Left ventricle myocardium inferior (tissue), 1 donor: ENCODE measurements at regions of chr2 and their contacts with region 1.

Region 1: GRCh38 chr2:187453078-187453641 is 5.1 kb upstream of the CALCRL start:
- DNase-seq: no peak
- H3K4me3 ChIP-seq: no peak overlapping the region
- H3K27ac ChIP-seq: no peak overlapping the region
- H3K4me1 ChIP-seq: no peaks in the 10 kb centered on the region
- H3K27me3 ChIP-seq: no peaks in the 10 kb centered on the region
- CTCF ChIP-seq: peak; percentile 62

Region 2: GRCh38 chr2:186862869-186863709 is 590.1 kb before region 1 on chr2:
- intact Hi-C with region 1: loop called (anchors 5 kb)
- DNase-seq: no peak
- H3K4me3 ChIP-seq: no peak overlapping the region
- H3K27ac ChIP-seq: no peak overlapping the region
- H3K4me1 ChIP-seq: peaks cover 4% of the 10 kb centered on the region
- H3K27me3 ChIP-seq: no peaks in the 10 kb centered on the region
- CTCF ChIP-seq: peak; percentile 84

Region 3: DNA sequence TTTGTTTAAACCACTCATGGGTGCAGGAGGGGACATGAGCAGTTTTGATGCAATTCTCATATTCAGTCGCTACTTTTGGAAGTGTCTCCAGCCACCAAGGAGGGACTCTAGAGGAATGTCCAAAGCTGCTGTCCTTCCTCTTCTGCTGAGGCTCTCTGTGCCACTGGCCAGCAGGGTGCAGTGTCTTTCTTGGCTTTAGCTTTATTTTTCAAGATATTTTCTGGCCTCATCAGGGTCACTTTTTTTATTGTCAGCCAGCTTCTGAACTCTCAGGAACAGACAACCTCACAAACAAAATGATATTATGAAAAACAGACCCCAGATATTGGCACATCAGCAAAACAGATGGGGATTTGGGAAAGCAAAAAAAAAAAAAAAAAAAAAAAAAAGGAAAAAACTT is 314.9 kb before region 1 on chr2:
- intact Hi-C with region 1: loop called (anchors 10 kb)
- DNase-seq: peak; percentile 38
- H3K4me3 ChIP-seq: no peak overlapping the region
- H3K27ac ChIP-seq: peak overlapping the region; percentile 70
- H3K4me1 ChIP-seq: peaks cover 2% of the 10 kb centered on the region
- H3K27me3 ChIP-seq: no peaks in the 10 kb centered on the region
- CTCF ChIP-seq: peak; percentile 65

Region 4: GRCh38 chr2:187851955-187852561 is 398.9 kb after region 1 on chr2:
- intact Hi-C with region 1: no loop called
- DNase-seq: no peak
- H3K4me3 ChIP-seq: peak overlapping the region; percentile 39
- H3K27ac ChIP-seq: peak overlapping the region; percentile 32
- H3K4me1 ChIP-seq: no peaks in the 10 kb centered on the region
- H3K27me3 ChIP-seq: no peaks in the 10 kb centered on the region
- CTCF ChIP-seq: no peak